ENCODE measurements at regions of chr1 and their contacts with region 1.

Region 1: GRCh38 chr1:25895365-25895993 is 10.7 kb downstream of the STMN1 start:
- DNase-seq: peak; percentile 89 to 96 (median 93)
- ATAC-seq: peak; percentile 84
- H3K4me3 ChIP-seq: no peak overlapping the region
- H3K27ac ChIP-seq: no peak overlapping the region
- H3K4me1 ChIP-seq: peaks cover 15 to 33% of the 10 kb centered on the region in 2 donors
- H3K27me3 ChIP-seq: no peaks in the 10 kb centered on the region
- CTCF ChIP-seq: peak; percentile 97 to 98

Region 2: DNA sequence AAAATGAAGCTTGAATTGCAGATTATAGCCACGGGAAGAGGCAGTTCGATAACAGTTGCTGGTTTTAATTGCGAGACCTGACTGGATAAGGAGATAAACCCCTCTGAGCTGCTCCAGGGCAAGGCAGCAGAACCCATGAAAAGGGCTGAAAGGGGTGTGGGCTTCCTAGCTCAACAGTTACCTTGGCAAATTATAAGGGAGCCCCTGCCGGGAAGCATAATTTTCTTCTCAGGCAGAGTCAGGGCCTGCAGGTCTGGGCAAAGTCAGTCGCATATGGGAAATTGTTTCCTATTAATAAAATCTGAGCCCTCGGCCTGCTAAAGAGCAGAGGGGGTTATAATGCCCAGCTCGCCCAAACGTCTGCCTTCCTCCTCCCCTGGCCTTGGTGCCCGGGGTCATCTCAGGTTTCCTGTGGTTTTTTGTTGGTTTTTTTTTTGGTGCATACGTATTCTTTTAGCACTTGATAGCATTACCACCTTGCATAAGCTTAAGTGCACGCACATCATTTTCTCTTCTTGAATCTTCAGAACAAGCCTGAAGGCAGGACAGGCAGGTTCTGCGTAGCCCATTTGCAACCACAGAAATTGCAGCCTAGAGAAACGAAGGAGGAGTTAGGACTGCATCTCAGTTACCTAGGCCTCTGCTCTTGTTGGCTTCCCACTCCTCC is 129.4 kb before region 1 on chr1:
- intact Hi-C with region 1: no loop called
- DNase-seq: no peak
- ATAC-seq: no peak
- H3K4me3 ChIP-seq: no peak overlapping the region
- H3K27ac ChIP-seq: no peak overlapping the region
- H3K4me1 ChIP-seq: peaks cover 4% of the 10 kb centered on the region in 2 donors
- H3K27me3 ChIP-seq: no peaks in the 10 kb centered on the region
- CTCF ChIP-seq: no peak

Region 3: GRCh38 chr1:25997828-25998761 is 102.6 kb after region 1 on chr1 and contains the start of gene PAFAH2:
- intact Hi-C with region 1: loop called in 1 of 2 experiments (anchors 5 kb)
- DNase-seq: peak; percentile 97 to 99 (median 98)
- ATAC-seq: peak; percentile 99
- H3K4me3 ChIP-seq: peak within 1 kb of the TSS; percentile 58 to 67
- H3K27ac ChIP-seq: peak within 1 kb of the TSS; percentile 84 to 94
- H3K4me1 ChIP-seq: peaks cover 6 to 22% of the 10 kb centered on the region in 2 donors
- H3K27me3 ChIP-seq: no peaks in the 10 kb centered on the region
- CTCF ChIP-seq: peak; percentile 91 to 98
- polyA plus RNA-seq, gene PAFAH2: 11.7 to 17.5 (median 12.9) TPM